ENCODE measurements at regions of chr1 and their contacts with region 1.

Region 1: GRCh38 chr1:94045465-94046056 is 75.4 kb downstream of the ABCA4 start:
- DNase-seq: peak; percentile 15
- H3K4me3 ChIP-seq: peak overlapping the region in 1 of 4 donors; percentile 45
- H3K27ac ChIP-seq: peak overlapping the region; percentile 36 to 81 (median 76)
- H3K4me1 ChIP-seq: peaks cover 5 to 27% (median 20%) of the 10 kb centered on the region in 3 donors
- H3K27me3 ChIP-seq: no peaks in the 10 kb centered on the region
- CTCF ChIP-seq: peak; percentile 34 to 82 (median 66)
- POLR2A ChIP-seq: no peak

Region 2: DNA sequence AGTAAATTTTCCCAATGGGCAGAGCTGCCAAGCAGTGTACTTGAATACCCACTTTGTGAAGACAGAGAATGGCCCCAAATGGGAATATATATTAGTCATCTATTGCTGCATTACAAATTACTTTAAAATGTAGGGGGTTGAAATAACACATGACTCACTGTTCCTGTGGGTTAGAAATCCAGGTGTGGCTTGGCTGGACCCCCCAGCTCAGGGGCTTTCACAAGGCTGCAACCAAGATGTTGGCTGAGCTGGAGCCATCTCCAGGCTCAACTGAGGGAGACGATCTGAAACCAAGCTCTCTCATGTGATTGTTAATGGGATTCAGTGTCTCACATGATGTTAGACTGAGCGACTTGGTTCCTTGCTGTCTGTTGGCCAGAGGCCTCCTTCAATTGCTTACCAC is 225.2 kb after region 1 on chr1:
- intact Hi-C with region 1: no loop called
- DNase-seq: no peak
- H3K4me3 ChIP-seq: no peak overlapping the region
- H3K27ac ChIP-seq: no peak overlapping the region
- H3K4me1 ChIP-seq: peaks cover 0 to 11% (median 0%) of the 10 kb centered on the region in 3 donors
- H3K27me3 ChIP-seq: no peaks in the 10 kb centered on the region
- CTCF ChIP-seq: no peak
- POLR2A ChIP-seq: no peak

Region 3: GRCh38 chr1:94329986-94330385 is 284.4 kb after region 1 on chr1:
- intact Hi-C with region 1: loop called (anchors 5 kb)
- DNase-seq: no peak
- H3K4me3 ChIP-seq: no peak overlapping the region
- H3K27ac ChIP-seq: peak overlapping the region in 2 of 4 donors; percentile 17 to 42
- H3K4me1 ChIP-seq: peaks cover 5 to 47% (median 23%) of the 10 kb centered on the region in 3 donors
- H3K27me3 ChIP-seq: peaks cover 0 to 5% (median 0%) of the 10 kb centered on the region in 4 donors
- CTCF ChIP-seq: peak in 4 of 6 experiments; percentile 19 to 34 (median 29)
- POLR2A ChIP-seq: no peak